Mucosa of descending colon (tissue), 3 donors: ENCODE measurements at regions of chr19 and their contacts with region 1.

Region 1: GRCh38 chr19:53132141-53132991 is at the start of gene ZNF415:
- DNase-seq: peak; percentile 80 to 88 (median 85)
- ATAC-seq: peak; percentile 96
- H3K4me3 ChIP-seq: peak within 1 kb of the TSS; percentile 33
- H3K4me1 ChIP-seq: peaks cover 6% of the 10 kb centered on the region
- CTCF ChIP-seq: no peak
- total RNA-seq, gene ZNF415: 5.3 to 14.0 (median 6.6) TPM

Region 2: DNA sequence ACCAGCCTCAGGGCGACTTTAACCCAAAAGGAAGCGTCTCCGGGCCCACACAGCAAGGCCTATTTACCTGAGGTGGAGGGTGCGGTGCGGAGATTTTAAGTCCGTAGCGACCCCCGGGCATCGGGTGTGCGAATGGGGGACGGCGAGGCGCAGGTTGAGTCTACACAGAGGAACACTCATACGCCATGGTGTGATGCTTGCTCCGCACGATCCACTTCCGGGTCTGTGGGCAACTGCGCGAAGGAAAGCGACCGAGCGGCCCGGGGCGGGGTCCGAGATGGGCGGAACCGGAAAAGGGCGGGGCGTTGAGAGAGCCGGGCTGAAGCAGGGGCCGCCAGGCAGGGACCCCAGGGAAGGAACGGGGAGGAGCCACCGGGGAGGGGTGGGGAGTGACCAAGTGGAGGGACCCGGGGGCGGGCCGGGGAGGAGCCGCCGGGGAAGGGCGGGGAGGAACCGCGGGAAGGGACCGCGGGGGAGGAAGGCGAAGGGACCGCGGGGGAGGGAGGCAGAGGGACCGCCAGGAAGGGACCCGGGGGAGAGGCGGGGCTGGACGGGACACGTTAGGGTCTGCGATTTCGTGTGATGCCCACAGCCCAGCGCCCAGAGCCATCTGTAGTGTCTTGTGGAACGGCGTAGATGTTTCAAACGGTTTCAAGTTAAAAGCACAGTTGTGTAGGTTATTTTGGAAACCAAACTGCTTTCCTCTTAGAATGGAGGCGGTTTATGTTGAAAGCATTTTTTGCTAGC is 29.0 kb before region 1 on chr19 and contains the start of gene ZNF160:
- intact Hi-C with region 1: loop called in 1 of 2 experiments (anchors 2 kb)
- DNase-seq: peak; percentile 99
- ATAC-seq: peak; percentile 99
- H3K4me3 ChIP-seq: peak within 1 kb of the TSS; percentile 63
- H3K4me1 ChIP-seq: peaks cover 8% of the 10 kb centered on the region
- CTCF ChIP-seq: no peak
- total RNA-seq, gene ZNF160: 19.9 to 28.6 (median 28.0) TPM

Region 3: GRCh38 chr19:53328967-53329366 is 196.6 kb after region 1 on chr19:
- intact Hi-C with region 1: no loop called
- DNase-seq: no peak
- ATAC-seq: no peak
- H3K4me3 ChIP-seq: no peak overlapping the region
- H3K4me1 ChIP-seq: no peaks in the 10 kb centered on the region
- CTCF ChIP-seq: no peak